Common myeloid progenitor, CD34-positive (primary cell): ENCODE measurements at regions of chr12 and their contacts with region 1.

Region 1: GRCh38 chr12:47797441-47797840 is 22.3 kb downstream of the HDAC7 start:
- DNase-seq: peak in 2 of 3 donors; percentile 48 to 59
- H3K4me3 ChIP-seq: no peak overlapping the region
- H3K27ac ChIP-seq: no peak overlapping the region
- H3K4me1 ChIP-seq: peaks cover 10 to 50% (median 40%) of the 10 kb centered on the region in 4 experiments
- H3K27me3 ChIP-seq: no peaks in the 10 kb centered on the region

Region 2: GRCh38 chr12:47591361-47591791 is 206.1 kb before region 1 on chr12:
- CTCF ChIA-PET with region 1: no interaction called
- POLR2A ChIA-PET with region 1: no interaction called
- DNase-seq: no peak
- H3K4me3 ChIP-seq: no peak overlapping the region
- H3K27ac ChIP-seq: no peak overlapping the region
- H3K4me1 ChIP-seq: no peaks in the 10 kb centered on the region
- H3K27me3 ChIP-seq: no peaks in the 10 kb centered on the region

Region 3: DNA sequence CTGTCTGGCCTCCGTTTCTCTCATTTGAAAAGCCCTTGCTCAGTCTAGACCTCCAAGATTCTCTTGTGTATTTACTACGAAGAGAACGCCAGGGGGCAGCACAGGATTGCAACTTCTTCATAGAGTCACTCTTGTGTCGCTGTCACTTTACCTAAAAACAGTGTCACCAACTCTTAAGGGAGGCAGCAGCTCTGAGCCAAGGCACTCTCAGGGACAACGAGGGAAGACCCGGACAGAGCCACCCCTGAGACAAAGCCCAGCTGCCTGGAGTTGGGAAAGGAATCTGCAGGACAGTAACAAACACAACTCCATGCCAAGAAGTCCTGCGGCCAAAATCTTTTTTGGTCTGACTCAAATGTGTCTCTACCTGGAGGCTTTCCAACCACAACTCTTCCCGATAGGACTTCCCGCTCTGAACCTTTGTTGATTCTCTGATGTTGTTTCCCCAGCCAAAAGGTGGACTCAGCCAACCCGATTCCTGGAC is 82.0 kb before region 1 on chr12:
- CTCF ChIA-PET with region 1: interaction called, 10 read pairs
- POLR2A ChIA-PET with region 1: no interaction called
- DNase-seq: peak; percentile 84 to 93 (median 89)
- H3K4me3 ChIP-seq: no peak overlapping the region
- H3K27ac ChIP-seq: no peak overlapping the region
- H3K4me1 ChIP-seq: peaks cover 4 to 33% (median 23%) of the 10 kb centered on the region in 4 experiments
- H3K27me3 ChIP-seq: no peaks in the 10 kb centered on the region

Region 4: GRCh38 chr12:47785036-47785886 is 12.2 kb before region 1 on chr12:
- CTCF ChIA-PET with region 1: interaction called, 23 read pairs
- POLR2A ChIA-PET with region 1: interaction called, 3 read pairs
- DNase-seq: no peak
- H3K4me3 ChIP-seq: no peak overlapping the region
- H3K27ac ChIP-seq: peak overlapping the region in 1 of 2 experiments; percentile 25
- H3K4me1 ChIP-seq: peaks cover 0 to 10% (median 6%) of the 10 kb centered on the region in 4 experiments
- H3K27me3 ChIP-seq: no peaks in the 10 kb centered on the region

Region 5: DNA sequence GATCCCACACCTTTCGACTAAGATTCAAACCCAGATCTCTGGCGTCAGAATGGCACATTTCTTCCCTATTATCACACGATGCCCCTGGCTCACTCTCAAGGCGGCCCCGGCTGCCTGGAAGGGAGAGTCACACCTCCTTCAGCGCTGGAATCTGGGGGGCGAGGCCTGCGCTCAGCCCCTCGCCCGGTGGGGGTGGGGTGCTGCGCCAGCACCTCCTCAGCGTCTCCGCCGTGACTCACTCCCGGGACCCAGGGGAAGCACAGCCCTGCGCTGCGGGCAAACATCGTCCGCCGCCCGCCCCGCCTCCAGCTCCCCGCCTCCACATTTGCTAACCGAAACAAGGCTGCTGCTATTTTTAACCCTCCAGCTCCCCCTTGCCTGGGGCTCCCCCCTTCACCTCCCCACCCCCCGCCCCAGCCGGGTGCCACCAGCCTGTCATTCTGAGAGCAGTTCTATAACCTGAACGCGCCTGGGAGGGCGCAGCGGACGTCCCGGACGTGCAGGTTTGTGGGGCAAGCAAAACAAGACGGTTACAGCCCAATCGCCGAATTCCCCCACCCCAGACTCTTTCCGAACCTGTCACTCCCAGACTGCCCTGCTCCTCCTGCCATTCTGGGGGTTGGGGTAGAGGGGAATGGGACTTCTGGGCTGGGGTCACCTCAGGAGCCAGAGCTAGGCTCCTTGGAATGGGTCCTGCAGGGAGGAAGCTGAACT is 15.5 kb after region 1 on chr12:
- CTCF ChIA-PET with region 1: interaction called, 99 read pairs
- POLR2A ChIA-PET with region 1: interaction called, 12 read pairs
- DNase-seq: peak; percentile 91 to 98 (median 97)
- H3K4me3 ChIP-seq: peak overlapping the region in 6 of 7 experiments; percentile 35 to 74 (median 58)
- H3K27ac ChIP-seq: peak overlapping the region; percentile 59 to 88
- H3K4me1 ChIP-seq: peaks cover 45 to 98% (median 97%) of the 10 kb centered on the region in 4 experiments
- H3K27me3 ChIP-seq: no peaks in the 10 kb centered on the region

Region 6: GRCh38 chr12:47819896-47820630 is 22.6 kb after region 1 on chr12 and contains the start of gene HDAC7:
- CTCF ChIA-PET with region 1: interaction called, 1,391 read pairs
- POLR2A ChIA-PET with region 1: interaction called, 12 read pairs
- DNase-seq: peak; percentile 61 to 84 (median 71)
- H3K4me3 ChIP-seq: peak within 1 kb of the TSS; percentile 60 to 94 (median 79)
- H3K27ac ChIP-seq: peak within 1 kb of the TSS; percentile 64 to 86
- H3K4me1 ChIP-seq: peaks cover 11 to 73% (median 65%) of the 10 kb centered on the region in 4 experiments
- H3K27me3 ChIP-seq: no peaks in the 10 kb centered on the region